Activated naive CD4-positive, alpha-beta T cell treated with anti-CD3 and anti-CD28 coated beads for 36 hours (primary cell): ENCODE measurements at regions of chr2 and their contacts with region 1.

Region 1: GRCh38 chr2:230793572-230794359 is 71.0 kb upstream of the ITM2C start:
- DNase-seq: peak; percentile 89
- H3K4me3 Mint-ChIP-seq: peak overlapping the region; percentile 56
- H3K27ac Mint-ChIP-seq: no peak overlapping the region
- H3K4me1 Mint-ChIP-seq: peaks cover 52% of the 10 kb centered on the region
- H3K27me3 Mint-ChIP-seq: no peaks in the 10 kb centered on the region

Region 2: GRCh38 chr2:230225486-230225885 is 568.3 kb before region 1 on chr2 and contains the start of gene SP140:
- CTCF ChIA-PET with region 1: no interaction called
- intact Hi-C with region 1: loop called (anchors 2 kb)
- DNase-seq: peak; percentile 87
- H3K4me3 Mint-ChIP-seq: peak within 1 kb of the TSS; percentile 81
- H3K27ac Mint-ChIP-seq: peak within 1 kb of the TSS; percentile 97
- H3K4me1 Mint-ChIP-seq: peaks cover 62% of the 10 kb centered on the region
- H3K27me3 Mint-ChIP-seq: no peaks in the 10 kb centered on the region
- total RNA-seq, gene SP140: 95.1 to 98.8 TPM

Region 3: GRCh38 chr2:230636684-230637271 is 157.0 kb before region 1 on chr2:
- CTCF ChIA-PET with region 1: interaction called, 10 read pairs
- intact Hi-C with region 1: loop called (anchors 1 kb)
- DNase-seq: peak; percentile 49
- H3K4me3 Mint-ChIP-seq: no peak overlapping the region
- H3K27ac Mint-ChIP-seq: peak overlapping the region; percentile 86
- H3K4me1 Mint-ChIP-seq: peaks cover 26% of the 10 kb centered on the region
- H3K27me3 Mint-ChIP-seq: no peaks in the 10 kb centered on the region

Region 4: GRCh38 chr2:230666885-230667712 is 126.7 kb before region 1 on chr2:
- CTCF ChIA-PET with region 1: interaction called, 3 read pairs
- intact Hi-C with region 1: loop called (anchors 1 kb)
- DNase-seq: peak; percentile 62
- H3K4me3 Mint-ChIP-seq: no peak overlapping the region
- H3K27ac Mint-ChIP-seq: peak overlapping the region; percentile 11
- H3K4me1 Mint-ChIP-seq: peaks cover 80% of the 10 kb centered on the region
- H3K27me3 Mint-ChIP-seq: no peaks in the 10 kb centered on the region

Region 5: GRCh38 chr2:230735884-230736283 is 57.9 kb before region 1 on chr2:
- CTCF ChIA-PET with region 1: interaction called, 12 read pairs
- intact Hi-C with region 1: loop called (anchors 1 kb)
- DNase-seq: no peak
- H3K4me3 Mint-ChIP-seq: no peak overlapping the region
- H3K27ac Mint-ChIP-seq: peak overlapping the region; percentile 17
- H3K4me1 Mint-ChIP-seq: peaks cover 81% of the 10 kb centered on the region
- H3K27me3 Mint-ChIP-seq: no peaks in the 10 kb centered on the region

Region 6: DNA sequence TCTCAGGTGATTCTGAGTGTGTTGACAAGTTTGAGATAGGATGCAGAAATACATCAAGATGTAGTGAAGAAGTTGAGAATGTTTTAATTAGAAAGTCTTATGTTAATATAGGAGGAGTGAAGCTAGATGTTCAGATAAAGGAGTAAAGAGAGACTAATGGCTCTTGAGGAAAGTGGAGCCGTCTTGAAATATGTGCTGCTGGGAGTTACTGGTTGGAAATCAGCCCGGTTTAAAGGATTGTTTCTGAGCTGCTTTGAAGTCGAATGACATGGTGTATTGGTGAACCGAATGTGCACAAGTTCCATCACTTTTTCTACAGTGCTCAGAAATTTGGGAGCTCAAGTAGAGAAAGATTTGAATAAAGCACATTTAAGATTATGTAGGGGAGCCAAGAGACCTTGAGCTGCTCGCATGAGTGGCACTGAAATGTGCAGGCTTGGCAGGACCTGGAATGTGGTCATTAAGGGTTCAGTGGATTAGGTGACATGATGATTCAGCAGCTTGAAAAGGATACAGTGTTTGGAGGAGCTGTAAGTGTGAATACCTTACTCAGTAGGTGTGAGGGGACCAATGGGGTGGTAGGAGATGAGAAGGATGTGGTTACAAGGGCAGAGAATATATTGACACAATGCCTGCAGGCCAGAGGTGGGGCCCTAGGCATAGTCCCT is 12.5 kb before region 1 on chr2:
- CTCF ChIA-PET with region 1: interaction called, 9 read pairs
- intact Hi-C with region 1: loop called (anchors 1 kb)
- DNase-seq: peak; percentile 80
- H3K4me3 Mint-ChIP-seq: no peak overlapping the region
- H3K27ac Mint-ChIP-seq: peak overlapping the region; percentile 79
- H3K4me1 Mint-ChIP-seq: peaks cover 78% of the 10 kb centered on the region
- H3K27me3 Mint-ChIP-seq: no peaks in the 10 kb centered on the region

Region 7: GRCh38 chr2:230873476-230874451 is 80.0 kb after region 1 on chr2:
- CTCF ChIA-PET with region 1: no interaction called
- intact Hi-C with region 1: no loop called
- DNase-seq: no peak
- H3K4me3 Mint-ChIP-seq: no peak overlapping the region
- H3K27ac Mint-ChIP-seq: no peak overlapping the region
- H3K4me1 Mint-ChIP-seq: peaks cover 37% of the 10 kb centered on the region
- H3K27me3 Mint-ChIP-seq: no peaks in the 10 kb centered on the region